ENCODE measurements at regions of chr7 and their contacts with region 1.

Region 1: DNA sequence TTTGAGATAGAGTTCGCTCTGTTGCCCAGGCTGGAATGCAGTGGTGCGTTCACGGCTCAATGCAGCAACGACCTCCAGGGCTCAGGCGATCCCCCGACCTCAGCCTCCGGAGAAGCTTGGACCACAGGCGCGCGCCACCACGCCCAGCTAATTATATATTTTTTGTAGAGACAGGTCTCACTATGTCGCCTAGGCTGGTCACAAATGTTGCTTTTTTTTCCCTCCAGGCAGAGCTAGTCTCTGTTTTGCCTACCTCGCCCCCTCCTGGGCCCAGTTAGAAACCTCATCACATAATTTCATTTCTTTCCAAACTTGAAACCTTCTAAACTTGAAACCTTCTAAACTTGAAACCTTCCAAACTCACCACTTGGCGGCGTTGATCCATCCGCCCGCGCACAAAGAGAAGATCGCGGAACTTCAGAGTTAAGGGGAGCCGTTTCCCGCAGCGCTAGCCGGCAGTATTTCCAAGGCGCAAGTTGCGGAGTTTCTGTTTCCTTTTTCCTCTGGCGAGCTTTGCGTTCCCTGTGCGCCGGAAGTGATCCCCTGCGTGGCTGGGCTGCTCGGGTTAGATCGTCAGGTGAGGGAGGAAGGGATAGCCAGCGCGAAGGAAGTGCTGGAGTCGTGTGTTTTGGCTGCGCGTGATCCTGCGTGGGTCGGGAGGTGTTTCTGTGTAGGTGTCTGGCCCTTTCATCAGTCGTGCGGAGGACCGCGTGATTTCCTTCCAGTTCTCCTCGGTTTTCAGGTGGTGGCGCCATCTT is at the start of gene SSBP1:
- DNase-seq: peak; percentile 96
- H3K4me3 ChIP-seq: peak within 1 kb of the TSS; percentile 79
- H3K27ac ChIP-seq: peak within 1 kb of the TSS; percentile 73
- H3K4me1 ChIP-seq: peaks cover 28% of the 10 kb centered on the region
- CTCF ChIP-seq: peak; percentile 95
- total RNA-seq, gene SSBP1: 177 and 235 TPM in 2 replicates

Region 2: DNA sequence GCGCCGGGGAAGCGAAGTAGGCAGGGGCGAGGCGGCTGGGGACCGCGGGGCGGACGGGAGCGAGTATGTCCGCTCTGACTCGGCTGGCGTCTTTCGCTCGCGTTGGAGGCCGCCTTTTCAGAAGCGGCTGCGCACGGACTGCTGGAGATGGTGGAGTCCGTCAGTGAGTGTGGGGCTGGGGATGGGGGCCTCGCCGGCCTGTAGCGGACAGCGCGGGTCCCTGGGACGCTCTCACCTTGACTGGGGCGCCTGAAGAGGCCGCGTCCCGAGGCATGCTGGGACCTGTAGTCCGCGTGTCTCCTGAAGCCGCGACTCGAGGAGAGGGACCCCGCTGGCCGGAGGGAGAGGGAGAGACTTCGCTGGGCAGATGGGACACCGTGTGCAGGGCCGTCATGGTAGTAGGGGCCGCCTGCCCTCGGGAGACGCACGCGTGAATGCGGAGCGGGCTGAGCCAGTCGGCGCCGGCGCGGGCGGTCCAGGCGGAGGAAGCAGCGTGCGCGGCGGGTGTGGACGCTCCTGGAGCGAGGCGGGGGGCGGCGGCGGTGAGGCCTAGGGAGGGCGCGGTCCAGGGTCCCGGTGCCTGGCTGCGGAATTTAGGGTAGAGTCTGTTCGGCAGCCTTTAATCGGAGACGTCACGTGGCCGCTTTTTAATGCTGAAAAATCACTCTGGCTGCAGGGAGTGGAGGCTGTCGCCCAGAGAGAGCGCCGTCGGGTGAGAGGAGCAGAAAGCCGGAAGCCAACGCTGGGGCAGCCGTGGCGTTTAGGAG is 1041.2 kb before region 1 on chr7 and contains the start of gene NDUFB2:
- CTCF ChIA-PET with region 1: no interaction called
- POLR2A ChIA-PET with region 1: no interaction called
- intact Hi-C with region 1: loop called (anchors 5 kb)
- DNase-seq: peak; percentile 81
- H3K4me3 ChIP-seq: peak within 1 kb of the TSS; percentile 77
- H3K27ac ChIP-seq: peak within 1 kb of the TSS; percentile 66
- H3K4me1 ChIP-seq: peaks cover 21% of the 10 kb centered on the region
- CTCF ChIP-seq: peak; percentile 33; the same call in 1 of the 2 replicates
- total RNA-seq, gene NDUFB2: 139 and 158 TPM in 2 replicates

Region 3: GRCh38 chr7:140924019-140924820 is 813.8 kb before region 1 on chr7:
- CTCF ChIA-PET with region 1: no interaction called
- POLR2A ChIA-PET with region 1: no interaction called
- intact Hi-C with region 1: loop called (anchors 5 kb)
- DNase-seq: peak; percentile 80
- H3K4me3 ChIP-seq: peak overlapping the region; percentile 92
- H3K27ac ChIP-seq: peak overlapping the region; percentile 73
- H3K4me1 ChIP-seq: peaks cover 36% of the 10 kb centered on the region
- CTCF ChIP-seq: peak; percentile 76

Region 4: DNA sequence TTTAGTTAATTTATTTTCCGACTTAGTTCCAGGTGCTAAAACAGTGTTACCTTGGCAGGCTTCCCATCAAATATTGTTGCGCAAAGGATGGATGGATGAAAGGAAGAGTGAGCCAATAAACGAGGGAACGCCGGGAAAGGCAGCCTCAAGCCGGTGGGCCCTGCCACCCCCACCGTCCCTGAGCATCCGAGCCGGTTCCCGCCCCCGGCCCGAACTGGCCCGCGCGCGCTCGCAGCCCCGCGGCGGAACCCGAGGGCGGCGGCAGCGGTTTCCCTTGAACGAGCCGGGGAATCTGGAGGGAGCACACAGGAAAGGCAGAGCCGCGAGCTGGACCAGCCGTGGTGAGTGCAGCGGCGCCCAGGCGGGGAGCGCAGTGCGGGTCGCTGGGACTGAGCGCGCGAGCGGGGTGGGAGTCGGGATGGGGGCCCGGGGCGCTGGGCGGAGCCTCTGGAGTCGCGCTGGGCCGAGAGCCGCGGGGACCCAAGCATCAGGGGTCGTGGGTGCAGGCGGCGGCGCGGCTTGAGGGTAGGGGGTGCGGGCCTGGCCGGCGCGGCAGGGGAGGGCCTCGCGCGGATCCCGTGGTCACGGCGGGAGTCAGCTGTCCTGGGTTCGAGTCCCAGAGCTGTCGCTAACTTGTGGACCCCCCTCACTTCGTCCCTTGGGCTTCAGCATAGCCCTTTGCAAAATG is 186.8 kb before region 1 on chr7 and contains the start of gene AGK:
- CTCF ChIA-PET with region 1: no interaction called
- POLR2A ChIA-PET with region 1: interaction called, 4 read pairs
- intact Hi-C with region 1: loop called (anchors 5 kb)
- DNase-seq: peak; percentile 83
- H3K4me3 ChIP-seq: peak within 1 kb of the TSS; percentile 90
- H3K27ac ChIP-seq: no peak within 1 kb of the TSS
- H3K4me1 ChIP-seq: peaks cover 21% of the 10 kb centered on the region
- CTCF ChIP-seq: no peak
- total RNA-seq, gene AGK: 26.5 and 31.2 TPM in 2 replicates

Region 5: GRCh38 chr7:141654551-141654950 is 83.5 kb before region 1 on chr7:
- CTCF ChIA-PET with region 1: interaction called, 4 read pairs
- POLR2A ChIA-PET with region 1: interaction called, 3 read pairs
- intact Hi-C with region 1: loop called (anchors 1 kb)
- DNase-seq: peak; percentile 61
- H3K4me3 ChIP-seq: no peak overlapping the region
- H3K27ac ChIP-seq: no peak overlapping the region
- H3K4me1 ChIP-seq: peaks cover 1% of the 10 kb centered on the region
- CTCF ChIP-seq: peak; percentile 88

Region 6: GRCh38 chr7:141701489-141702046 is 36.4 kb before region 1 on chr7:
- CTCF ChIA-PET with region 1: no interaction called
- POLR2A ChIA-PET with region 1: interaction called, 7 read pairs
- intact Hi-C with region 1: loop called (anchors 1 kb)
- DNase-seq: peak; percentile 67
- H3K4me3 ChIP-seq: peak overlapping the region; percentile 76
- H3K27ac ChIP-seq: no peak overlapping the region
- H3K4me1 ChIP-seq: peaks cover 9% of the 10 kb centered on the region
- CTCF ChIP-seq: no peak

Region 7: GRCh38 chr7:143287935-143288826 is 1550.2 kb after region 1 on chr7 and contains the start of gene CASP2:
- CTCF ChIA-PET with region 1: no interaction called
- POLR2A ChIA-PET with region 1: no interaction called
- intact Hi-C with region 1: loop called (anchors 5 kb)
- DNase-seq: peak; percentile 96
- H3K4me3 ChIP-seq: peak within 1 kb of the TSS; percentile 95
- H3K27ac ChIP-seq: peak within 1 kb of the TSS; percentile 66
- H3K4me1 ChIP-seq: peaks cover 36% of the 10 kb centered on the region
- CTCF ChIP-seq: 0 out of 2 replicates have a peak, but pooled peaks have one; percentile 34
- total RNA-seq, gene CASP2: 27.2 and 33.9 TPM in 2 replicates